ENCODE measurements at regions of chr9 and their contacts with region 1.

Region 1: GRCh38 chr9:121992571-121993212 is 100.4 kb downstream of the TTLL11 start:
- DNase-seq: peak; percentile 65
- ATAC-seq: peak; percentile 53
- H3K4me3 ChIP-seq: no peak overlapping the region
- H3K27ac ChIP-seq: no peak overlapping the region
- H3K4me1 ChIP-seq: peaks cover 38% of the 10 kb centered on the region
- H3K27me3 ChIP-seq: no peaks in the 10 kb centered on the region
- CTCF ChIP-seq: peak; percentile 79
- EP300 ChIP-seq: no peak
- POLR2A ChIP-seq: no peak
- RAD21 ChIP-seq: peak; percentile 71

Region 2: DNA sequence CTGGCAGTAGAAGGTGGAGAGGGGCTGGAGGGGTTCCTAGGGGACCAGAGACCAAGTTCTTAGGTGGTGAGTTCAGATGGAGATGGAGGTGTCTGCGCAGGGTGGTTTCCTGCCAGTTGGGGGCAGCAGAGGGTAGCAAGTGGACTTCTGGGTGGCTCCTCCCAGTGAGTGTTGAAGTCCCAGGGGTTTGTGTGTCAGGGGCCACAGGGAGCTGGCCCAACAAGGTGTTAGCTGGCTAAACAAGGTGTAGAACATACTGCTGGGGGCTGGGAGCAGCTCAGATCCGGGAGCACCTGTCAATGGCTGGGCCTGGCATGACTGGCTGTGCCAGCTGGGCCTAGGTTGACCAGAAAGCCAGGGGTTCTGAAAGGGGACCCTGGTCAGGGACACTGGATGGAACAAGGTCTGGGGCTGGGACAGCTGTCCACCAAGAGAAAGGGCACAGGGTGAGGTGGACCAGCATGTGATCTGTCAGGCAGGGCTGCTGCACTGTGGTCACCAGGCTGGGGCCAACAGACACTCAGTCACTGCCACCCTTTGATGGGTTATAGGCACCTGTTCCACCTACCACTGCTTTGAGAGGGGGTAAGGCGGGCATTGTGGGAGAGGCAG is 305.7 kb before region 1 on chr9:
- CTCF ChIA-PET with region 1: interaction called, 14 read pairs
- POLR2A ChIA-PET with region 1: no interaction called
- in situ Hi-C with region 1: no loop called
- intact Hi-C with region 1: loop called (anchors 1 kb)
- DNase-seq: peak; percentile 63
- ATAC-seq: peak; percentile 87
- H3K4me3 ChIP-seq: no peak overlapping the region
- H3K27ac ChIP-seq: no peak overlapping the region
- H3K4me1 ChIP-seq: peaks cover 36% of the 10 kb centered on the region
- H3K27me3 ChIP-seq: no peaks in the 10 kb centered on the region
- CTCF ChIP-seq: peak; percentile 96
- EP300 ChIP-seq: no peak
- POLR2A ChIP-seq: no peak
- RAD21 ChIP-seq: peak; percentile 75

Region 3: DNA sequence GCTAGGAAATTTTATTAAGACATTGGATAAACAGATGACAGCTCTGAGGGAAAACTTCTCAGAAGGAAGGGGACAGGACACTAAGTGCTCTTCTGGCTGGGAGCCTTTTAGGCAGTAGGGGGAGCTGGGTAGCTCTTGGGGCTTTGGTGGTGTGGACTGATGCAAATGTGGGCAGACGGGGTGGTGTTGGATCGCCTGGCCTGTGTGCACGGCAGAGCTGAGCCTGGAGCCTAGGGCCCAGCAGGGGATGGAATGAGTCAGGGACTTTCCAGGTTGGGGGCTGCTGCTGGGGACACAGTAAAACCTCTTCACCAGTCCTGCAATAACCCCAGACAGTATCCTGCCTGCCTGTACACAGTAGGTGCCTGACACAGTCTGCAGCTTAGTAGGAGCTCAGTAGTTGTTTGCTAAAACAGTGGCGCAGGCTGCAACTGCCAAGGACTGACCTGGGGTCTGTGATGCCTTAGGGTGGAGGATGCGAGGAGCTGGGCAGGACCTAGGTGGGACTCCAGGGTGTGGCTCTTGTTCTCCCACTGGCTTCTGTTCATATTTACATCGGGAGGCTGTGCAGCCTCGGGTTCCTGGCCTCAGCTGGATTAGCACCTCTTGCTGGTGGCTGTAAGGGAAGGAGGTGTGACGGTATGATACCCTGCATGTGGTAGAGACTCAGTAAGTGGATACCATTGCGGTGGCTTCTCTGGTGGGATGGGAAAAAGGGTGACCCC is 257.5 kb before region 1 on chr9:
- CTCF ChIA-PET with region 1: interaction called, 3 read pairs
- POLR2A ChIA-PET with region 1: no interaction called
- in situ Hi-C with region 1: loop called (anchors 25 kb)
- intact Hi-C with region 1: loop called (anchors 2 kb)
- DNase-seq: peak; percentile 62
- ATAC-seq: peak; percentile 87
- H3K4me3 ChIP-seq: no peak overlapping the region
- H3K27ac ChIP-seq: no peak overlapping the region
- H3K4me1 ChIP-seq: peaks cover 38% of the 10 kb centered on the region
- H3K27me3 ChIP-seq: no peaks in the 10 kb centered on the region; a peak in 2 of 5 replicates
- CTCF ChIP-seq: peak; percentile 82
- EP300 ChIP-seq: no peak
- POLR2A ChIP-seq: no peak
- RAD21 ChIP-seq: peak; percentile 77

Region 4: GRCh38 chr9:121744002-121744686 is 248.5 kb before region 1 on chr9:
- CTCF ChIA-PET with region 1: no interaction called
- POLR2A ChIA-PET with region 1: interaction called, 4 read pairs
- in situ Hi-C with region 1: loop called (anchors 25 kb)
- intact Hi-C with region 1: loop called (anchors 2 kb)
- DNase-seq: peak; percentile 74
- ATAC-seq: peak; percentile 83
- H3K4me3 ChIP-seq: peak overlapping the region; percentile 70 to 85 (median 71)
- H3K27ac ChIP-seq: peak overlapping the region; percentile 48
- H3K4me1 ChIP-seq: peaks cover 91% of the 10 kb centered on the region
- H3K27me3 ChIP-seq: no peaks in the 10 kb centered on the region
- CTCF ChIP-seq: peak; percentile 94
- EP300 ChIP-seq: no peak
- POLR2A ChIP-seq: peak in 1 of 2 experiments; percentile 34; a peak in 1 of 4 replicates
- RAD21 ChIP-seq: peak; percentile 75